Activated CD4-positive, alpha-beta T cell treated with anti-CD3 and anti-CD28 coated beads for 36 hours (primary cell): ENCODE measurements at regions of chr3 and their contacts with region 1.

Region 1: DNA sequence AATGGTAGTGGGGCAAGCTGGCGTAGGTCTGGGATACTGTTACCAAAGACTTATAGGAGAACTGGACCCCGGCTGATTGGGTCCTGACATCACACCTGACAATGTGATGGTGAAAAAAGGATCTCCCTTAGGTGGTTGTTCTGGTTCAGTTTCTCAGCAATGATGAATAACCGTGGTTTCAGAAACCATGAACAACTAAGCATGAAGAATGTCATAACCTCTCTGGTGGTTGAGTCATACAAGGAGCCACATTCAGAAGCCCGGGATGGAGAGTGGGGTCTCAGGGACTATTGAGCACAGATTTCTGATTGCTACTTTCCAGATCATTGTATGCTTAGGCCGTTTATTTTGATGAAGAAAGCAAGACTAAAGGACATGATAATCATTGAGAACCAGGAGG is 17.4 kb downstream of the GPR160 start:
- DNase-seq: peak; percentile 45
- ATAC-seq: peak; percentile 70
- H3K4me3 Mint-ChIP-seq: no peak overlapping the region
- H3K27ac Mint-ChIP-seq: no peak overlapping the region
- H3K4me1 Mint-ChIP-seq: peaks cover 41% of the 10 kb centered on the region
- H3K27me3 Mint-ChIP-seq: no peaks in the 10 kb centered on the region

Region 2: DNA sequence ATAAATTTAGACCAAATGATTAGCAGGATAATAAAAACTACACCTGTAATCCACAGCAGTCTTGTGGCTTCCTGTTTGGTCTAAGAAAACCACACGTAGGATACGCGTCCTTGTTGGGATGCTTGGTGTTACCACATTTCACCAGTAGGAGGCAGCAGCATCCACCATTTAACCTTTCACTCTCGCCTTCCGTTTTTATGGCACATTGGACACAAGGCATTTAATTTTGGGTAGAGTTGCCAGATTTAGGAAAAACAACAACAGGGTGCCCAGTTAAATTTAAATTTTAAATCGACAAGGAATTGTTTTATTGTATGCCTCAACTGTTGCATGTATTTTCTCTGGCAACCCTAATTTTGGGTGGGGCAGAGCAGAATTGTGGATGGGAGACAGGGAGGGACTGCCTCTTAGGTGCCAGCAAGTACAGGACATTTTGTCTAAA is 191.7 kb before region 1 on chr3:
- CTCF ChIA-PET with region 1: interaction called, 17 read pairs
- POLR2A ChIA-PET with region 1: no interaction called
- intact Hi-C with region 1: loop called (anchors 1 to 5 kb)
- DNase-seq: peak; percentile 77
- ATAC-seq: peak; percentile 61
- H3K4me3 Mint-ChIP-seq: no peak overlapping the region
- H3K27ac Mint-ChIP-seq: no peak overlapping the region
- H3K4me1 Mint-ChIP-seq: peaks cover 18% of the 10 kb centered on the region
- H3K27me3 Mint-ChIP-seq: peaks cover 4% of the 10 kb centered on the region

Region 3: DNA sequence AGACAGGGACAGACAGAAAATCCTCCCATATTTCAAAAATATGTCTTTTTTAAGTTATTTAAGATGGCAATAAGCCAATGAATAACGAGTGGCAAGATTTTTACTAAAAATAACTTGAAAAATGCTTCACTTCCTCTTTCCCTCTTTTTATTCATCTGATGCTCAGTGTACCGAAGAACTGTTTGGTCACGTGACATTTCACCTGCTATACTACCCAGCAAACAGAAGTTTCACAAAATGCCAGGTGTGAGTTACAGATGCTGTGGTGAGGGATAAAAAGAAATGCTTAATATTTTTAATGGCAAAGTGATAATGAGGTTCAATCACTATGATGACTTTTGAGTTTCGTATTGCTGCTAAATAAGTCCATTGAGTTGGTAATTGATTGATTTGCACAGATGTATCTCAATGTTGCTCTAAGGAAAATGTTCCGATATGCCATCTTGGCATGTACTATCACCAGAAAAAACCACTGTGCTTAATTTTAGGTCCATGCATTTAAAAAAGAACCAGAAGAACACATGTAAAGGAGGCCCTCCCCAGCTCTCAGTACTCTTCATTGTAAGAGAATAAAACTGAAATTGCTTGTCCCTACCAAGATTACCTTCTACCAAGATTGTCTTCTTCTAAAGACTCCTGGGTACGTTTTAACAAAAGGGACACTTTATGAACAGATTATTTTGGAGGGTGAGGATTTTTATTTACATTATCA is 114.6 kb before region 1 on chr3:
- CTCF ChIA-PET with region 1: no interaction called
- POLR2A ChIA-PET with region 1: no interaction called
- intact Hi-C with region 1: no loop called
- DNase-seq: no peak
- ATAC-seq: no peak
- H3K4me3 Mint-ChIP-seq: no peak overlapping the region
- H3K27ac Mint-ChIP-seq: no peak overlapping the region
- H3K4me1 Mint-ChIP-seq: peaks cover 22% of the 10 kb centered on the region
- H3K27me3 Mint-ChIP-seq: no peaks in the 10 kb centered on the region

Region 4: GRCh38 chr3:170007031-170007663 is 48.1 kb before region 1 on chr3:
- CTCF ChIA-PET with region 1: no interaction called
- POLR2A ChIA-PET with region 1: no interaction called
- intact Hi-C with region 1: no loop called
- DNase-seq: peak; percentile 65
- ATAC-seq: peak; percentile 98
- H3K4me3 Mint-ChIP-seq: peak overlapping the region; percentile 54
- H3K27ac Mint-ChIP-seq: peak overlapping the region; percentile 88
- H3K4me1 Mint-ChIP-seq: peaks cover 37% of the 10 kb centered on the region
- H3K27me3 Mint-ChIP-seq: no peaks in the 10 kb centered on the region

Region 5: DNA sequence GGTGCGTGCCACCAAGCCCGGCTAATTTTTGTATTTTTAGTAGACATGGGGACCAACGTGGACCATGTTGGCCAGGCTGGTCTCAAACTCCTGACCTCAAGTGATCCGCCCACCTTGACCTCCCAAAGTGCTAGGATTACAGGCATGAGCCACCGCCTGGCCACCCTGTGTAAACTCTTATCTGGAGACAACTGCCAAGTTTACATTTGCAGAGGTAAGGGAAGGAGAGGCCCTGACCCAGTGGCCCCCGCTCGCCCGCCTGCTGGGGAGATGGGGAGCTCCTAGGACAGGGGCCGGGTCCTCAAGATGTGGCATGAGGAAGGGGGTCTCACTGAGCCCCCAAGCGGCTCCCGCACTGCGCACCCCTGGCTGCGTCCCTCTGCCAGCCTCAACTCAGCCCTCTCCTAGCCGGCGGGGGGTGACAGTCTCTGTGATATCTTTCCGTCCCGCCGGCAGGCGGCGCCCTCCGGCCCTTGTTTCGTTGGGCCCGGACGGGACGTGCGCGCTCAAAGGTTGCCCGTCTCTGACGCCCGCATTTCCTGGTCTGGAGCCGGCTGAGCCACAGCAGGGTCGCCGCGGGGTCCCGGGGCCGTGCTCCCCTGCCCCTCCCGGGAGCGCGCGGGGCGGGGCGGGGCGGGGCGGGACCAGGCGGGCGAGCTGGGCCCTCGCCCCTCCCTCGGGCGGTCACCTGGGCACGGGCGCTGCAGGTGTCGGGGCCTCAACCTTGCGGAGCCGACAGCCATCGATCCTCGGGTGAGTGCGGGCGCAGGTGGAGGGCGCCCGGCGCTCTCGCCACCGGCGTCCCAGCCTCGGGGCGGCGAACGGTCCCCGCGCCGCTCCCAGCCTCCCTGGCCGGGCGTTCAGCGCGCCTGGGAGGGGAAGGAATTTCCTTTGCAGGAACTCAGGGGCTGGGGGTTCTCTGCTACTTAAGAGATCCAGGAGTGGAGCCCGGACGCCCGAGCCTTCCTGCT is 17.5 kb before region 1 on chr3 and contains the start of gene GPR160:
- CTCF ChIA-PET with region 1: interaction called, 8 read pairs
- POLR2A ChIA-PET with region 1: no interaction called
- intact Hi-C with region 1: loop called (anchors 1 to 2 kb)
- DNase-seq: peak; percentile 92
- ATAC-seq: peak; percentile 92
- H3K4me3 Mint-ChIP-seq: peak within 1 kb of the TSS; percentile 79
- H3K27ac Mint-ChIP-seq: no peak within 1 kb of the TSS
- H3K4me1 Mint-ChIP-seq: peaks cover 19% of the 10 kb centered on the region
- H3K27me3 Mint-ChIP-seq: no peaks in the 10 kb centered on the region
- total RNA-seq, gene GPR160: 9.4 to 11.1 TPM

Region 6: GRCh38 chr3:170162630-170163029 is 107.4 kb after region 1 on chr3:
- CTCF ChIA-PET with region 1: interaction called, 3 read pairs
- POLR2A ChIA-PET with region 1: no interaction called
- intact Hi-C with region 1: loop called in 1 of 2 experiments (anchors 5 kb)
- DNase-seq: no peak
- ATAC-seq: no peak
- H3K4me3 Mint-ChIP-seq: no peak overlapping the region
- H3K27ac Mint-ChIP-seq: peak overlapping the region; percentile 68
- H3K4me1 Mint-ChIP-seq: peaks cover 69% of the 10 kb centered on the region
- H3K27me3 Mint-ChIP-seq: no peaks in the 10 kb centered on the region

Region 7: DNA sequence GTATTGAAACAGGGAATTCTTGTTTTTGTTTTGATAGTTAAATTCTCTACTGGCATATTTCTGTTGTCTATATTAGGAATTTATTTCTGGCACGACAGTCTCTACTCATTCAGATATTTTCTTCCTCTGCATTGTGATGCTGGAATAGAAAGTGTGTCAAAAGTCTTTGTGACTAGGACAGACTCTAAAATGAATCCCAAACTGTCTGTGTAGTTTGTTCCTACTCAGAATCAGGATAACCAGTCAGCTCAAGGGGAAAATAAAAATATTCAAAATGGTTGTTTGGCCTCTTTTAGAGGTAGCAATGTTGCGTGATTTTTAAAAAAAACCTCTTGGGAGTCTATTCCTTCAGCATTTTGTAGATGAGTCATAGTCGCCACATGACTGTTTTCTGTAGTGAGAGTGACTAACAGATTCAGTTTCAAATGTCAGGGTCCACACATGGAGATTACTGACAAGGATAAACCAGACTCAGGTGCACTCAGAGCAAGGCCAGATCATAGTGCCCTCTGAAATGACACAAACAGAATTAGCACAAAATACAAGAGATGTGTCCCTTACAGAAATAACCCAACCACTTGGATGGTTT is 517.5 kb after region 1 on chr3:
- CTCF ChIA-PET with region 1: no interaction called
- POLR2A ChIA-PET with region 1: no interaction called
- intact Hi-C with region 1: loop called (anchors 5 kb)
- DNase-seq: peak; percentile 32
- ATAC-seq: peak; percentile 97
- H3K4me3 Mint-ChIP-seq: no peak overlapping the region
- H3K27ac Mint-ChIP-seq: no peak overlapping the region
- H3K4me1 Mint-ChIP-seq: peaks cover 25% of the 10 kb centered on the region
- H3K27me3 Mint-ChIP-seq: peaks cover 34% of the 10 kb centered on the region